AG04450 (cell line): ENCODE measurements at regions of chr3 and their contacts with region 1.

Region 1: GRCh38 chr3:86990734-86991481 is at the start of gene VGLL3:
- DNase-seq: peak; percentile 64
- H3K4me3 ChIP-seq: peak within 1 kb of the TSS; percentile 94
- H3K27ac ChIP-seq: peak within 1 kb of the TSS; percentile 92
- H3K27me3 ChIP-seq: no peaks in the 10 kb centered on the region
- CTCF ChIP-seq: peak; percentile 40; the same call in 1 of the 2 replicates
- polyA plus RNA-seq, gene VGLL3: 27.2 and 28.3 TPM in 2 replicates

Region 2: GRCh38 chr3:86537171-86537570 is 453.7 kb before region 1 on chr3:
- CTCF ChIA-PET with region 1: no interaction called
- POLR2A ChIA-PET with region 1: no interaction called
- DNase-seq: no peak
- H3K4me3 ChIP-seq: no peak overlapping the region
- H3K27ac ChIP-seq: no peak overlapping the region
- H3K27me3 ChIP-seq: no peaks in the 10 kb centered on the region
- CTCF ChIP-seq: no peak

Region 3: GRCh38 chr3:86740751-86741150 is 250.2 kb before region 1 on chr3:
- CTCF ChIA-PET with region 1: no interaction called
- POLR2A ChIA-PET with region 1: no interaction called
- DNase-seq: no peak
- H3K4me3 ChIP-seq: no peak overlapping the region
- H3K27ac ChIP-seq: no peak overlapping the region
- H3K27me3 ChIP-seq: no peaks in the 10 kb centered on the region
- CTCF ChIP-seq: no peak

Region 4: GRCh38 chr3:87006844-87007439 is 16.0 kb after region 1 on chr3:
- CTCF ChIA-PET with region 1: interaction called, 17 read pairs
- POLR2A ChIA-PET with region 1: no interaction called
- DNase-seq: no peak
- H3K4me3 ChIP-seq: no peak overlapping the region
- H3K27ac ChIP-seq: no peak overlapping the region
- H3K27me3 ChIP-seq: no peaks in the 10 kb centered on the region
- CTCF ChIP-seq: peak; percentile 66